ENCODE measurements at regions of chr1 and their contacts with region 1.

Region 1: GRCh38 chr1:153946622-153947241 is at the start of gene DENND4B:
- DNase-seq: peak; percentile 83 to 87
- ATAC-seq: peak; percentile 73 to 86 (median 78)
- H3K4me3 ChIP-seq: peak within 1 kb of the TSS; percentile 65 to 99 (median 91)
- H3K27ac ChIP-seq: peak within 1 kb of the TSS; percentile 97 to 100 (median 100)
- H3K4me1 ChIP-seq: peaks cover 5 to 44% (median 30%) of the 10 kb centered on the region in 9 donors
- H3K27me3 ChIP-seq: no peaks in the 10 kb centered on the region
- CTCF ChIP-seq: peak; percentile 89 to 98 (median 94)
- total RNA-seq, gene DENND4B: 29.4 to 60.4 (median 39.0) TPM

Region 2: DNA sequence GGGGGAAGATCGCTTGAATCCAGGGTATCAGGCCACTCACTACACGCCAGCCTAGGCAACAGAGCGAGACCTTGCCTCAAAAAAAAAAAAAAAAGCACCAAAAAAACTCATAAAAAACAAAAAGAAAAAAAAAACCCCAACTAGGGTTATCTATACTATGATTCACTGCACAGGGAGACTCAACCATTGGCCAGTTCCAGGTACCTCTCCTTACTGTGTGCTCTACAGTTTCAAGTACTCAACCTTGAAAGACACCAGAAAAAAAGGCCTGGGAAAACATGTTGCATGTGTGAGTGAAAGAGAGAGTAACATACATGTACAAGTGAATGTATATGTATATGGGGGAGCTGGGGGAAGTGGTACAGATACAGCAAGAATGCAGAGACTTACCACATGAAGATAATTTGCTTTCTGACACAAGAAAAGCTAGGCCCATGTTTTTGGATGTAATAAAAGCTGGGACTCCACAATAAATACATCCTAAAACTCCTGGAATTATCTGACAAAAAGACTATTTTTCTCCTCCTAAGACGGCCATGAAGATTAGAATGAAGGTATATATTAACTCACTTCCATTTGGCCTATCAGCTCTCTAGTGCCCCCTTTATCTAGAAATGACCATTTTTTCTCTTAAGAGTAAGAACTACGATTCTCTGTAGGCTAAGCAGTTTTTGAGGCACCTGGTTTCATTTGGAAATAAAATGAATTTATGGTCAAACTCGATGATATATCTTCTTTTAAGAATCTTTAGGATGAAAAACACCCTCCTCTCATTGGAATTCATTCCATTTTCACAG is 119.4 kb before region 1 on chr1:
- intact Hi-C with region 1: loop called in 2 of 10 experiments (anchors 5 to 10 kb)
- DNase-seq: no peak
- ATAC-seq: no peak
- H3K4me3 ChIP-seq: no peak overlapping the region
- H3K27ac ChIP-seq: no peak overlapping the region
- H3K4me1 ChIP-seq: peaks cover 0 to 20% (median 8%) of the 10 kb centered on the region in 9 donors
- H3K27me3 ChIP-seq: no peaks in the 10 kb centered on the region
- CTCF ChIP-seq: no peak